ENCODE measurements at regions of chr2 and their contacts with region 1.

Region 1: DNA sequence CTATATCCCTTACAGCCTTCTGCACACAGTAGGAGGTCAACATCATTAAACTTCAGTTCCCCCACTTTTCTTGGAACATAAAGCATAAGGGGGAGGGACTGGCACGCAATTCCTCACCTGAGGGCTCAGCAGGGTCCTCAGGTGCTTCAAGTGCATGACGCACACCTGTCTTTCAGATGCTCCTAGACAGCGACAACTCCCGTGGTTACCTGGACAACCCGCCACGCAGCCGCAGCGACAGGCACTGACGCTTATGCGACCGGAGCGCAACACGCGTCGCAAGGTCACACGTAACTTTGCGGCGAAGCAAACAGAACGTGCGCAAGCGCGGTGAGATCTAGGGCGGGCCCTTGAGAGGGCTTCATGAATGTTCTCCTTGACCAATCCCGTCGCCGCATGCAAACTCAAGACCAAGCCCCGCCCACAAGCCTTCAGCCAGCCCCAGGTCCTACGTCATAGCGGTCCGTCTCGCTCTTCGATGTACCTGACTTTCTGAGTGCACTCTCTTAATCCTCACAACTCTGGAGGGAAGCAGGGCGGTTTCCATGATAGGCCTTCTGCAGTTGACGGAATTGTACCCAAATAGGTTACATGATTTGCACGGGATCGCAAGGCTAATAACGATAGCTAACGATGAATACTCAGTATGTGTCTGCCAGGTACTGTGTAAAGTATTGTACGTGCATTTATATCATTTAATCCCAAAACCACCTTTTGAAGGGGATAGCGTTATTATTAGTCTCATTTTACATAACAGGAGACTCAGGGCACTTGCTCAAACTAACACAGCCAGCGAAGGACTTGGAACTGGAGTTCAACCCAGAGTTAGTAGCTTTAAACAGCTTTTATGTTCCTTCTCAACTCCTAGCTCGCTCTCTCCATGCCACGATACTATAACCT is at the start of gene IFT172:
- DNase-seq: peak; percentile 98 to 100 (median 99)
- ATAC-seq: peak; percentile 91
- H3K4me3 ChIP-seq: peak within 1 kb of the TSS; percentile 53 to 57
- H3K4me3 Mint-ChIP-seq: peak within 1 kb of the TSS; percentile 82
- H3K27ac ChIP-seq: peak within 1 kb of the TSS; percentile 85 to 90
- H3K27ac Mint-ChIP-seq: peak within 1 kb of the TSS; percentile 94
- H3K4me1 ChIP-seq: peaks cover 20% of the 10 kb centered on the region
- H3K4me1 Mint-ChIP-seq: peaks cover 21% of the 10 kb centered on the region
- H3K27me3 ChIP-seq: peaks cover 7 to 10% of the 10 kb centered on the region in 2 experiments
- H3K27me3 Mint-ChIP-seq: peaks cover 13% of the 10 kb centered on the region
- CTCF ChIP-seq: no peak
- total RNA-seq, gene IFT172: 15.0 to 17.2 TPM

Region 2: GRCh38 chr2:26591619-26592505 is 897.9 kb before region 1 on chr2:
- CTCF ChIA-PET with region 1: no interaction called
- POLR2A ChIA-PET with region 1: no interaction called
- intact Hi-C with region 1: no loop called
- DNase-seq: no peak
- ATAC-seq: no peak
- H3K4me3 ChIP-seq: no peak overlapping the region
- H3K4me3 Mint-ChIP-seq: no peak overlapping the region
- H3K27ac ChIP-seq: no peak overlapping the region
- H3K27ac Mint-ChIP-seq: no peak overlapping the region
- H3K4me1 ChIP-seq: no peaks in the 10 kb centered on the region
- H3K4me1 Mint-ChIP-seq: peaks cover 5% of the 10 kb centered on the region
- H3K27me3 ChIP-seq: no peaks in the 10 kb centered on the region
- H3K27me3 Mint-ChIP-seq: peaks cover 16% of the 10 kb centered on the region
- CTCF ChIP-seq: no peak

Region 3: DNA sequence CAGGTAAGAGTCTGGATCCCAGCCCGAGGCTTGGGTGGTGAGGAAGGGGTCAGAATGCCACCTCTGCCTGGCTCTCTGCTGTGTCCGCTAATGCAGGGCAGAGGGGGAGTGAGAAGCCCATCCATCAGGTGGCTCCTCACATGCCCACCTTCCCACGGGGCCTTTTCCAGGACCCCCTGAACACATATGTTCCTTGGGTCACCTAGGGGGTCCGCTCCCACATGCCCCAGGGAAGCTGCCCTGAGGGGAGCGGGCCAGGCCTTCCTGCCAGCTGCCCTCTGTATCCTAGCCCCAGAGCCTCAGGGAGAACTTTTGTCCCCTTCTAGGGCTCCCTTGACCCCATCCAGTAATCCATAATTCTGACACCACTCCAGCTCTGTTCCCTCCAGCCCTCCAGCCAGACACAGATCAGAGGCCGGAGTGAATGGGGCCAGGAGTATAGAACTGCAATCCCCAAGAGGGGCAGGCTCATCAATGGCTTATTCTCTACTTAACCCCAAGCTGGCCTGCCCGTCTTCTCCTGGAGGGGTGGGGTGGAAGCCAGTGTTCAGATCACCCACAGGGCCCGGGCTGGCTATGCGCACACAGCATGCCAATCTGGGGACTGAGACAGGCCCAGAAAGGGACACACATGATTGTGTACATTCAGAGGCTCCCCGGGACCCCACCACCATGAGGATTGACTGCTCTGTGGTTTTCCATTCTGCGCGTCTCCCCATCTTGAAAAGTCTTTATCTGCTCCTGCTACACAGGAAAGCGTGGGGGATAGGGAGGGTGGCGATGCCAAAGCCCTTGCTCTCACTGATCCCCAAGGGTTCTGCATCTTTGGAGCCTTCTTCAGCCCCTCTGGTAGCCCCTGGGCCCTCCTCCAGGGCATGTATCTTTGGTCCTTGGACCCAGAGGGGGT is 410.3 kb before region 1 on chr2:
- CTCF ChIA-PET with region 1: no interaction called
- POLR2A ChIA-PET with region 1: no interaction called
- intact Hi-C with region 1: loop called in 1 of 2 experiments (anchors 2 kb)
- DNase-seq: no peak
- ATAC-seq: no peak
- H3K4me3 ChIP-seq: no peak overlapping the region
- H3K4me3 Mint-ChIP-seq: no peak overlapping the region
- H3K27ac ChIP-seq: no peak overlapping the region
- H3K27ac Mint-ChIP-seq: no peak overlapping the region
- H3K4me1 ChIP-seq: peaks cover 37% of the 10 kb centered on the region
- H3K4me1 Mint-ChIP-seq: peaks cover 34% of the 10 kb centered on the region
- H3K27me3 ChIP-seq: no peaks in the 10 kb centered on the region
- H3K27me3 Mint-ChIP-seq: no peaks in the 10 kb centered on the region
- CTCF ChIP-seq: no peak

Region 4: DNA sequence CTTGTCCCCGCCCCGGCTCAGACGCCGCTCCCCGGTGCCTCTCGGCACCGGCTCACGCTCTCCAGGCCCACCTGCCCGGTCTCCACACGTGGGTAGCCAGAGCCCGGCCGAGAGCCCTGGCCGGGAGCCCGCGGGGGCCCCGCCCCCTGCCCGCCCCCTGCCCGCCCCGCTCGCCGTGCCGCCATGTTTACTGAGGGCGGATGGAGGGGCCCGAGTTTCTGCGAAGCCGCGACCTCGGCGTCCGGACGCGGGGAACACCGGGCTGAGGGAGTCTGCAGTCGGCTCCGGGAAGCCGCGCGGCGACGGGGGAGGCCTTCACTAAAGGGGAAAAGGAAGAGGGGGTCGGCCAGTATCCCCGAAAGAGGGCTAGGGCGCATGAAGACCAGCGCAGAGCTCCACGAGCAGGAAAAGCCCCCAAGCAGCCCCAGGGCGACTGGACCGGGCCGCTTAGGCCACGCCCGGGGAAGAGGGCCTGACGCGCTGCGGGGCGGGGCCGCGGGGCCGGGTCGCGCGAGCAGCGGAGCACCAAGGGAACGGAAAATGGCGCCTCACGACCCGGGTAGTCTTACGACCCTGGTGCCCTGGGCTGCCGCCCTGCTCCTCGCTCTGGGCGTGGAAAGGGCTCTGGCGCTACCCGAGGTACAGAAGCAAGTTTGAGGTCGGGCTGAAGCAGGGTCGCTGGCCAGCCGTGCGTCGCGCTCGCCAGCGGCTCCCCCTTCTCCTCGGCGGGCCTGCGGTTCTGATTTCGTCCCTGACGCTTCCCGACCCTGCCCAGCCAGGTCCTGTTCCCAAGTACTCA is 277.7 kb before region 1 on chr2 and contains the starts of genes ATRAID and SLC5A6:
- CTCF ChIA-PET with region 1: no interaction called
- POLR2A ChIA-PET with region 1: no interaction called
- intact Hi-C with region 1: loop called (anchors 2 to 5 kb)
- DNase-seq: peak; percentile 78 to 94 (median 87)
- ATAC-seq: peak; percentile 84
- H3K4me3 ChIP-seq: peak within 1 kb of the TSS; percentile 67 to 99
- H3K4me3 Mint-ChIP-seq: peak within 1 kb of the TSS; percentile 100
- H3K27ac ChIP-seq: peak within 1 kb of the TSS; percentile 97 to 100
- H3K27ac Mint-ChIP-seq: peak within 1 kb of the TSS; percentile 100
- H3K4me1 ChIP-seq: peaks cover 26% of the 10 kb centered on the region
- H3K4me1 Mint-ChIP-seq: peaks cover 44% of the 10 kb centered on the region
- H3K27me3 ChIP-seq: no peaks in the 10 kb centered on the region
- H3K27me3 Mint-ChIP-seq: no peaks in the 10 kb centered on the region
- CTCF ChIP-seq: no peak
- total RNA-seq, gene ATRAID: 70.0 to 71.7 TPM
- total RNA-seq, gene SLC5A6: 410 to 431 TPM

Region 5: DNA sequence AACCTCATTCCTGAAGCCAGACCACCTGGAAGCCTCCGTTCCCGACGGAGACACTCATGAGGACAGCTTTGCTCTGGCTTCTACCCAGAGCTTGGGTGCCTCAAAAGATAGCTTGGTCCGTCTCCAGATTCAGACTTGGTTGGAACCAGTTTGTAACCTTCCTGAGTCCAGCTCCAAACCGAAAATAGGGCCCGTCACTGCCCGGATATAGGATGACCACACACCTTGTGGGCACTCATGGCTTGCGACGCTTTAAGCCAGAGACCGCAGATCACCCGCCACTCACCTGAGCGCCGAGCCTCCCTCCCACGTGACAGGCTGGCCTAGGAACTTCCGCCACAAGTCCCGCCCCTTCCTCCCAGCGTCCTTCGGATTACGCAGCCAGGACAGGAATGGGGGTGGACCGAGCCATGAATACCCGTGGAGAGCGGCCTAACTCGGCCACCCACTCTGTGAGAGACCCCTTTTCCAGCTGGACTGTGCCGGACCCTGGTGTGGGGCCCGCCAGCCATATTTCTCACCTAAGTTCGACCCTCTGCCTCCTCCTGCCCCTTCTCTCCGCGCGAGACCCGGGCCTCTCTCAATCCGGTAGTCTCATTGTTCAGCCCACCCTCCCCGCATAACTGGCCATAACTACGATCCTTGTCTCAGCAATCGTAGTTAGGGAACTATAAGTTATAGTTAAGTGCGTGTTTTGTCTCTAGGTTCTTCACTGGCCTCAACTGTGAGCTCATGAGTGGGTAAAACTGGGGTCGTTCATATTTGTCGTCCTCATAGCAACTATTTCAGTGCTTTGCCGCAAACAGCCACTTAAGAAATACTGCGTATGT is 166.8 kb before region 1 on chr2 and contains the start of gene MPV17:
- CTCF ChIA-PET with region 1: no interaction called
- POLR2A ChIA-PET with region 1: no interaction called
- intact Hi-C with region 1: loop called (anchors 1 kb)
- DNase-seq: peak; percentile 65 to 93 (median 87)
- ATAC-seq: peak; percentile 96
- H3K4me3 ChIP-seq: peak within 1 kb of the TSS; percentile 80 to 81
- H3K4me3 Mint-ChIP-seq: peak within 1 kb of the TSS; percentile 99
- H3K27ac ChIP-seq: peak within 1 kb of the TSS; percentile 89 to 94
- H3K27ac Mint-ChIP-seq: peak within 1 kb of the TSS; percentile 99
- H3K4me1 ChIP-seq: peaks cover 9% of the 10 kb centered on the region
- H3K4me1 Mint-ChIP-seq: peaks cover 25% of the 10 kb centered on the region
- H3K27me3 ChIP-seq: no peaks in the 10 kb centered on the region
- H3K27me3 Mint-ChIP-seq: no peaks in the 10 kb centered on the region
- CTCF ChIP-seq: no peak
- total RNA-seq, gene MPV17: 23.6 to 26.0 TPM

Region 6: DNA sequence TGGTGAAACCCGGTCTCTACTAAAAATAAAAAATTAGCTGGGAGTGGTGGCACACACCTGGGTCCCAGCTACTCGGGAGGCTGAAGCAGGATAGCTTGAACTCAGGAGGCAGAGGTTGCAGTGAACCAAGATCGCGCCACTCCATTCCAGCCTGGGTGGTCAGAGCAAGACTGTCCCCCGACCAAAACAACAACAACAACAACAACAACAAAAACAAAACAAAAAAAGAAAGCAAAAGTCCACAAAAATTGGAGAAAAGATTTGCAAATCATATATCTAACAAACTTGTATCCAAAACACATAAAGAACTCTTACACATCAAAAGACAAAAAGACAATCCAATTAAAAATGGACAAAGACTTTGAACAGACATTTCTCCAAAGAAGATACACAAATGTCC is 90.8 kb before region 1 on chr2:
- CTCF ChIA-PET with region 1: no interaction called
- POLR2A ChIA-PET with region 1: no interaction called
- intact Hi-C with region 1: no loop called
- DNase-seq: no peak
- ATAC-seq: no peak
- H3K4me3 ChIP-seq: no peak overlapping the region
- H3K4me3 Mint-ChIP-seq: no peak overlapping the region
- H3K27ac ChIP-seq: no peak overlapping the region
- H3K27ac Mint-ChIP-seq: no peak overlapping the region
- H3K4me1 ChIP-seq: peaks cover 5% of the 10 kb centered on the region
- H3K4me1 Mint-ChIP-seq: peaks cover 49% of the 10 kb centered on the region
- H3K27me3 ChIP-seq: no peaks in the 10 kb centered on the region
- H3K27me3 Mint-ChIP-seq: no peaks in the 10 kb centered on the region
- CTCF ChIP-seq: no peak

Region 7: DNA sequence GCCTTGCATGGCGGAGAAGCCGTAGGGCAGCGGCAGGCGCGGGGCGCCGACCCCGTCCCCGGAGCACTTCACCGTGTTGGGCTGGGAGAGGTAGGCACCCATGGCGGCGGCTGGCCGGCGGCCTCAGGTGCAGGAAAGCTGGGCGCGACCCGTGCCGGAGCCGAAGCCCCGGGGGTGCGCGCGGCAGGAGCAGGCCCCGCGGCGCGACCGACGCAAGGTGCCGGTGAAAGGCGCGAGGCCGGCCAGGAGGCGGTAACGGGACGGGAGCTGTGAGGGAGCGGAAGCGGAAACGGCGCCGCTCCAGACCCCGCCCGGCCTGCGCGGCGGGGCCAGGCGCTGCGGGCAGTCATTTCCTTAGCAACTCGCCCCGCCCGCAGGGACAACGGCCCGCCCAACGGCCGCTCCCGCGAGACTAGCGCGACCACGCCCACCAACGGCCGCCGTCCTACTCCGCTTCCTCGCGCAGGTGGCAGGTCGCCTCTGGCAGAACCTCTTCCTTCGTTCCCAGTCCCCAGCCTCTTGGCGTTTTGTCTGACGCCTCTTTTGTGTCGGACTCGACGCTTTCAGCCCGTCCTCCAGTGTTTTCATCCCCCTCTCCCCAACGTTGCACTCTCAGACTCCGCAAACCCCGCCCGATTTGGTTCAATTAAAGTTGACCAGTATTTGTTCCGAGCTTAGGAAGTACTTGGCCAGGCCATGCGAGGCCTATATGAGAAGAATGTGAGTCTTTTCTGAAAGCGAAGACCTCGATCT is 80.3 kb before region 1 on chr2 and contains the start of gene PPM1G:
- CTCF ChIA-PET with region 1: no interaction called
- POLR2A ChIA-PET with region 1: no interaction called
- intact Hi-C with region 1: loop called (anchors 1 kb)
- DNase-seq: peak; percentile 91 to 98 (median 97)
- ATAC-seq: peak; percentile 96
- H3K4me3 ChIP-seq: peak within 1 kb of the TSS; percentile 51 to 98
- H3K4me3 Mint-ChIP-seq: peak within 1 kb of the TSS; percentile 88
- H3K27ac ChIP-seq: peak within 1 kb of the TSS; percentile 84 to 90
- H3K27ac Mint-ChIP-seq: peak within 1 kb of the TSS; percentile 97
- H3K4me1 ChIP-seq: peaks cover 21% of the 10 kb centered on the region
- H3K4me1 Mint-ChIP-seq: peaks cover 39% of the 10 kb centered on the region
- H3K27me3 ChIP-seq: no peaks in the 10 kb centered on the region
- H3K27me3 Mint-ChIP-seq: no peaks in the 10 kb centered on the region
- CTCF ChIP-seq: no peak
- total RNA-seq, gene PPM1G: 36.4 to 38.5 TPM

Region 8: DNA sequence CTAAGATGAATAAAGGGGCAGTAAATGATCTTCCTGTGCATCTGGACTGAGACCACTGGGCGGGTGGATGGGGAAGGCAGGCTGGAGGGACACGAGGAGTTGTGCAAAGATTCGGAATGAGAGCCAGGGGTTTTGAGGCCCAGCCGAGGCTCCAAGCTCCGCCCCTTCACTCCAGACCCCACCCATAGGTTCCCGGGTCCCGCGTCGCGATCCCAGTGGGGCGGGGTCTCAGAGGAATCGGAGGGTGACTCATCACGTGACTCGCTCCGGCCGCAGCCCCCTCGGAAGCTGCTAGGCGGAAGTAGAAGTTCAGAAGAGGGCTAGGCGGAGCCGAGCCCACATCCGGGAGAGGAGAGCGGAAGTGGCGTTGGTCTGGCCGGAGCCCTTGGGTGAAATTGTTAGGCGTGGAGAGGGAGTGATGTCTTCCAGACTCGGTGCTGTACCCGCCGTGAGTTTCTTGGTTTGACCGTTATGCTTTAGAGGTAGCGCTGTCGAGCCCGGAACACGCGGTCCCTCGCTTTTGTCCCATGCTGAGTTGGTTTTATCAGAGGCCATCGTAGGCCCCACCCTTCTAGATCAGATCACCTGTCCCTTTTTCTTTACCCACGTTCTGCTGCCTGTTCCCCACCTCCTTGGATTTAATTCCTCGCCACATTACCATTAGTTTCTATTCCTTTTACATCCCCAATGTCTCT is 93.1 kb after region 1 on chr2 and contains the start of gene ZNF512:
- CTCF ChIA-PET with region 1: no interaction called
- POLR2A ChIA-PET with region 1: no interaction called
- intact Hi-C with region 1: loop called (anchors 1 to 2 kb)
- DNase-seq: peak; percentile 54 to 89 (median 75)
- ATAC-seq: peak; percentile 76
- H3K4me3 ChIP-seq: peak within 1 kb of the TSS; percentile 57 to 62
- H3K4me3 Mint-ChIP-seq: peak within 1 kb of the TSS; percentile 98
- H3K27ac ChIP-seq: peak within 1 kb of the TSS; percentile 69 to 80
- H3K27ac Mint-ChIP-seq: peak within 1 kb of the TSS; percentile 98
- H3K4me1 ChIP-seq: peaks cover 41% of the 10 kb centered on the region
- H3K4me1 Mint-ChIP-seq: peaks cover 55% of the 10 kb centered on the region
- H3K27me3 ChIP-seq: peaks cover 0 to 3% of the 10 kb centered on the region in 2 experiments
- H3K27me3 Mint-ChIP-seq: no peaks in the 10 kb centered on the region
- CTCF ChIP-seq: no peak
- total RNA-seq, gene ZNF512: 12.4 TPM

Region 9: GRCh38 chr2:27723372-27724144 is 233.8 kb after region 1 on chr2:
- CTCF ChIA-PET with region 1: no interaction called
- POLR2A ChIA-PET with region 1: no interaction called
- intact Hi-C with region 1: no loop called
- DNase-seq: peak in 5 of 9 experiments; percentile 16 to 48 (median 32)
- ATAC-seq: no peak
- H3K4me3 ChIP-seq: no peak overlapping the region
- H3K4me3 Mint-ChIP-seq: no peak overlapping the region
- H3K27ac ChIP-seq: no peak overlapping the region
- H3K27ac Mint-ChIP-seq: no peak overlapping the region
- H3K4me1 ChIP-seq: no peaks in the 10 kb centered on the region
- H3K4me1 Mint-ChIP-seq: no peaks in the 10 kb centered on the region
- H3K27me3 ChIP-seq: peaks cover 2 to 4% of the 10 kb centered on the region in 2 experiments
- H3K27me3 Mint-ChIP-seq: peaks cover 17% of the 10 kb centered on the region
- CTCF ChIP-seq: peak; percentile 54

Region 10: DNA sequence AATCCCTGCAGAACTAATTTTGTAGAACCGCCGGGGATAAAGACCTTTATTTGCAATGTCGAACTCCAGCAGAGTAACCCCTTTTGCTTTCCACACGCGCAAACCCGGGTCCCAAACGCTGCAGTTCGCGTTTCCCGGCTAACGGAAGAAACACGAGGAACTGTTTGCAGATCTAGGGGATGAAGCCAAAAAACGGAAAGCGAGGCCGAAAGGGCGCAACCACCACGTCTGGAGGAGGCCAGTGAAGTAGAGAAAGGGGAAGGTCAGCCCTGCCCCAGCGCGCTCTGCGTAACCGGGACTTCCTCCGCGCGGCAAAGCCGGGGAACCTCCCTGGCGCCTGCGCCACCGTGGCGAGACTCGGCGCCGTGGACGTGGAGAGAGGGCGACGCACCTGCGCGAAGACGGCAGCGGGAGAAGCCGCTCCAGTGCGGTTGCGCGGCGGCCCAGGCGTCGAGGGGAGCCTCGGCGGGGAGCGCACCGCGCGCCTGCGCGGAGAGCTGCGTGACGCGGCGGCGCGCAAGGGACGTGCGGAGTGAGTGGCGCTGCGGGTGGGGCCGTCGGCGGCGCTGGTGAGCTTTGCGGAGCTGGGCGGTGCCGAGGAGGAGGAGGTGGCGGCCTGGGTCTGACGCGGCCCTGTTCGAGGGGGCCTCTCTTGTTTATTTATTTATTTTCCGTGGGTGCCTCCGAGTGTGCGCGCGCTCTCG is 1261.7 kb after region 1 on chr2 and contains the start of gene PPP1CB:
- CTCF ChIA-PET with region 1: no interaction called
- POLR2A ChIA-PET with region 1: no interaction called
- intact Hi-C with region 1: no loop called
- DNase-seq: peak; percentile 93 to 100 (median 95)
- ATAC-seq: peak; percentile 85
- H3K4me3 ChIP-seq: peak within 1 kb of the TSS; percentile 63 to 88
- H3K4me3 Mint-ChIP-seq: peak within 1 kb of the TSS; percentile 93
- H3K27ac ChIP-seq: peak within 1 kb of the TSS; percentile 86 to 97
- H3K27ac Mint-ChIP-seq: peak within 1 kb of the TSS; percentile 96
- H3K4me1 ChIP-seq: peaks cover 46% of the 10 kb centered on the region
- H3K4me1 Mint-ChIP-seq: peaks cover 65% of the 10 kb centered on the region
- H3K27me3 ChIP-seq: no peaks in the 10 kb centered on the region
- H3K27me3 Mint-ChIP-seq: no peaks in the 10 kb centered on the region
- CTCF ChIP-seq: no peak
- total RNA-seq, gene PPP1CB: 331 to 334 TPM

Measured in CD8-positive, alpha-beta T cell (primary cell).